Heart right ventricle (tissue), 16 donors: ENCODE measurements at regions of chr9 and their contacts with region 1.

Region 1: GRCh38 chr9:82488313-82489200 is 500.0 kb downstream of the SPATA31D1 start:
- DNase-seq: peak in 1 of 2 donors; percentile 72
- ATAC-seq: peak; percentile 72 to 93 (median 90)
- H3K4me3 ChIP-seq: peak overlapping the region in 1 of 10 donors; percentile 14
- H3K27ac ChIP-seq: peak overlapping the region; percentile 51 to 89 (median 70)
- H3K4me1 ChIP-seq: peaks cover 9 to 35% (median 29%) of the 10 kb centered on the region in 9 donors
- H3K27me3 ChIP-seq: no peaks in the 10 kb centered on the region
- CTCF ChIP-seq: no peak

Region 2: DNA sequence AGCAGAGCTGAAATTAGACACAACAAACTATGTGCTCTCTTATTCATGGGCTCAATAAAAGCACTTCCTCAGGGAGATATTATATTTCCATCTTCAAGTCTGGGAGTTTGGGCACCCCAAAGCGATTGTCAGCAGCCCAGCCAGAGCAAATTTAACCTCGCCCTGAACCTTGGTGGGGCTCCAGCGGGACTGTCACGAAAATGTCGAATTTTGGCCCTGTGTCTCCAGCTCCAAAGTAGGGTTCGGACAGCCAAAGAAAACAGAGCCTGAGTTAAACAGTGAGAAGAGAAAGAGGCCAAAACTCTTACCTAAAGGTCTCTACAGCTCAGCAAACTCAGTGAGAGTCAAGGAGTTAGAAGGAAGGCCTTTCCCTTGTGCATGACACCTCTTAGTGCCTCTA is 67.1 kb before region 1 on chr9:
- intact Hi-C with region 1: loop called in 1 of 10 experiments (anchors 10 kb)
- DNase-seq: peak; percentile 27 to 37
- ATAC-seq: peak in 3 of 8 donors; percentile 69 to 76 (median 69)
- H3K4me3 ChIP-seq: no peak overlapping the region
- H3K27ac ChIP-seq: no peak overlapping the region
- H3K4me1 ChIP-seq: peaks cover 0 to 5% (median 0%) of the 10 kb centered on the region in 9 donors
- H3K27me3 ChIP-seq: no peaks in the 10 kb centered on the region
- CTCF ChIP-seq: no peak

Region 3: GRCh38 chr9:82558855-82559630 is 70.5 kb after region 1 on chr9:
- intact Hi-C with region 1: loop called in 1 of 10 experiments (anchors 5 kb)
- DNase-seq: no peak
- ATAC-seq: no peak
- H3K4me3 ChIP-seq: no peak overlapping the region
- H3K27ac ChIP-seq: no peak overlapping the region
- H3K4me1 ChIP-seq: peaks cover 0 to 29% (median 14%) of the 10 kb centered on the region in 9 donors
- H3K27me3 ChIP-seq: no peaks in the 10 kb centered on the region
- CTCF ChIP-seq: no peak